Activated CD8-positive, alpha-beta T cell treated with anti-CD3 and anti-CD28 coated beads, Interleukin-2, amount 10 ng/mL, durations not matched to agents 7 days and 5 days (primary cell): ENCODE measurements at regions of chr14 and their contacts with region 1.

Region 1: GRCh38 chr14:20613094-20614037 is 22.2 kb upstream of the RNASE12 start:
- DNase-seq: peak; percentile 88
- ATAC-seq: peak; percentile 87
- H3K4me3 Mint-ChIP-seq: no peak overlapping the region
- H3K27ac Mint-ChIP-seq: no peak overlapping the region
- H3K4me1 Mint-ChIP-seq: peaks cover 22% of the 10 kb centered on the region
- H3K27me3 Mint-ChIP-seq: peaks cover 16% of the 10 kb centered on the region

Region 2: DNA sequence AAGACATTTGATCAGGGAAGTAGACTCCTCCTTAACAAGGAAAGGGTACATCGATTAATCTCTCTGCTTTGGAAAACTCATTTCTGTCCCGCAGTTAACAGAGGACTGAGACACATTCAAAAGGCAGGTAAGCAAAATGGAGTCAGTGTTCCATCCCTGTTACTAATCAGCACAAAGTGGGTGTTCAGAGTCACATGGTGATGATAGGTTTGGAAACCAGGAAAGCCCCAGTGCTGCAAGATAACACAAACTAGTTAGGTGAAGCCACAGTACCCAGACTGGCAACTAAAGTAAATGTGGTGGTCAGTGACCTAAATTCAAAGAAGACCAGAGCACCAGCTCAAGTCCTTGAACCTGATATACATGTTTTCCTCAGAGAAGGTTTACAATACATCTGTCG is 501.0 kb before region 1 on chr14:
- CTCF ChIA-PET with region 1: no interaction called
- POLR2A ChIA-PET with region 1: no interaction called
- DNase-seq: no peak
- ATAC-seq: no peak
- H3K4me3 Mint-ChIP-seq: no peak overlapping the region
- H3K27ac Mint-ChIP-seq: no peak overlapping the region
- H3K4me1 Mint-ChIP-seq: no peaks in the 10 kb centered on the region
- H3K27me3 Mint-ChIP-seq: no peaks in the 10 kb centered on the region

Region 3: DNA sequence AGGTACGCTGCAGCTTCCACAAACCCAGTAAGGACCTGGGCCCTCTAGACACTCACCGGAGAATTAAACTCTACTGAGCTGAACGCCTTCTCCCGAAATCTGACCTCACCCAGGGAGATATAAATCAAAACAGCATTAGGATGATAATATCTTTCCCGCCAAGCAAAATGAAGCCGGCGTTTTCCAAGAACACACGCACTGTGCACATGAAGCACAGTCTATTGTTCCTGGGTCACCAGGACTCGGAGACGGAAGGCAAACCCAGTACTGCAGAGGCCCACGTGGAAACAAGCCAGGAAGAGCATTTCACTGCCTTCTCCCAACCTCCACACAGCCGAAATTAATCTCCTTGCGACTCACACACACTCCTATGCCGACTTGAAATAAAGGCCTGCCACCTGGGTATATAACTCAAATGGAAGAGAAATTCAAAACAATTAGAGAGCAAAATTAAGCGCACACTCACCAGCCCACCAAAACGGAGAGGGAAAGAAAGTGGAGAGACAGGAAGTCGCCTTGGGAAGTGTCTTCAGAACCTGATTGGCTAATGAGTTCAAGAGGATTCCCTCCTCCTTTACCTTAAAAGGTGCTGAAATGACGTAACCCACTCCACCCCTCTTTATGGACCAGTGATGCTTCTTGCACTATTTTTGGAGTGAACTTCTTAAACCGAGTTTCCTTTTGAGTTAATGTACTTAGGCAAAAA is 280.4 kb before region 1 on chr14 and contains the start of gene CCNB1IP1:
- CTCF ChIA-PET with region 1: interaction called, 151 read pairs
- POLR2A ChIA-PET with region 1: no interaction called
- DNase-seq: peak; percentile 72
- ATAC-seq: peak; percentile 99
- H3K4me3 Mint-ChIP-seq: peak within 1 kb of the TSS; percentile 99
- H3K27ac Mint-ChIP-seq: peak within 1 kb of the TSS; percentile 93
- H3K4me1 Mint-ChIP-seq: peaks cover 51% of the 10 kb centered on the region
- H3K27me3 Mint-ChIP-seq: peaks cover 4% of the 10 kb centered on the region
- total RNA-seq, gene CCNB1IP1: 35.3 to 38.3 TPM

Region 4: DNA sequence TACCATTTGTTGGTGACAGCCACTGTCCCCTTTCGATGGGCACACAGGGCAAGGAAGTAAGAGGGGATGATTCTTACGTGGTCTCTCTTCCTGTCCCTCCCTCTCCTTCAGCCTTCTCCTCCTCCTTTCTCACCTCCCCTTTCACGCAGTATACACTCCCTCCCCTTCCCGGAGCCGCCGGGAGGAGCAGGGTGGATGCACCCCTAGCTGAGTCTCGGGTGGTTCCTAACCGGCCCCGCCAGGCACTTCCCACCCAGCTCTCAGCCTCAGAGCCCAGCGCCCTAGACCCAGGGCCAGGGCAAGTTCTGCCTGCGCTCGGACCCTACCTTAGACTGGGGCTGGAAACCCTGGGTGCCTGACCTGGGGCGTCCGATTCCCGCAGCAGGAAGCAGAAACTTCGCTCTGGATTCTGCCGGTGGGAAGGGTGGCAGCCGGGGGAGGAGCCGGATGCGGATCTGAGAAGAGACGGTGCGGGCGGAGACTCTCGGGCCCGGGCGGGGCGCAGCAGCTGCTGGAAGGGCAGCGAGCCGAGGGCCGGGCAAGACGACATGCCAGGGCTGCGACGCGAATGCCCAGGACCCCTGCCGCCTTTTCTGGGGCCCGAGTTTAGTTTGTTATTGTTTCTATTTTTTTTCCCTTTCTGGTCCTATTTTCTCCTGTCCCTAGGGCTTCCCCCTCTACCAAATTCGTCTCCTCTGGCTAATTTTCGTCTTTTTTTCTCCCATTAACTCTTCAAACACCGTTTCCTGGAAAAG is 200.1 kb before region 1 on chr14 and contains the start of gene TEP1:
- CTCF ChIA-PET with region 1: interaction called, 59 read pairs
- POLR2A ChIA-PET with region 1: interaction called, 3 read pairs
- DNase-seq: peak; percentile 82
- ATAC-seq: peak; percentile 92
- H3K4me3 Mint-ChIP-seq: peak within 1 kb of the TSS; percentile 94
- H3K27ac Mint-ChIP-seq: peak within 1 kb of the TSS; percentile 95
- H3K4me1 Mint-ChIP-seq: peaks cover 42% of the 10 kb centered on the region
- H3K27me3 Mint-ChIP-seq: no peaks in the 10 kb centered on the region
- total RNA-seq, gene TEP1: 34.6 to 48.7 TPM

Region 5: GRCh38 chr14:20624495-20625070 is 11.2 kb after region 1 on chr14:
- CTCF ChIA-PET with region 1: interaction called, 19 read pairs
- POLR2A ChIA-PET with region 1: interaction called, 3 read pairs
- DNase-seq: peak; percentile 68
- ATAC-seq: peak; percentile 66
- H3K4me3 Mint-ChIP-seq: peak overlapping the region; percentile 66
- H3K27ac Mint-ChIP-seq: peak overlapping the region; percentile 61
- H3K4me1 Mint-ChIP-seq: peaks cover 51% of the 10 kb centered on the region
- H3K27me3 Mint-ChIP-seq: peaks cover 60% of the 10 kb centered on the region

Region 6: DNA sequence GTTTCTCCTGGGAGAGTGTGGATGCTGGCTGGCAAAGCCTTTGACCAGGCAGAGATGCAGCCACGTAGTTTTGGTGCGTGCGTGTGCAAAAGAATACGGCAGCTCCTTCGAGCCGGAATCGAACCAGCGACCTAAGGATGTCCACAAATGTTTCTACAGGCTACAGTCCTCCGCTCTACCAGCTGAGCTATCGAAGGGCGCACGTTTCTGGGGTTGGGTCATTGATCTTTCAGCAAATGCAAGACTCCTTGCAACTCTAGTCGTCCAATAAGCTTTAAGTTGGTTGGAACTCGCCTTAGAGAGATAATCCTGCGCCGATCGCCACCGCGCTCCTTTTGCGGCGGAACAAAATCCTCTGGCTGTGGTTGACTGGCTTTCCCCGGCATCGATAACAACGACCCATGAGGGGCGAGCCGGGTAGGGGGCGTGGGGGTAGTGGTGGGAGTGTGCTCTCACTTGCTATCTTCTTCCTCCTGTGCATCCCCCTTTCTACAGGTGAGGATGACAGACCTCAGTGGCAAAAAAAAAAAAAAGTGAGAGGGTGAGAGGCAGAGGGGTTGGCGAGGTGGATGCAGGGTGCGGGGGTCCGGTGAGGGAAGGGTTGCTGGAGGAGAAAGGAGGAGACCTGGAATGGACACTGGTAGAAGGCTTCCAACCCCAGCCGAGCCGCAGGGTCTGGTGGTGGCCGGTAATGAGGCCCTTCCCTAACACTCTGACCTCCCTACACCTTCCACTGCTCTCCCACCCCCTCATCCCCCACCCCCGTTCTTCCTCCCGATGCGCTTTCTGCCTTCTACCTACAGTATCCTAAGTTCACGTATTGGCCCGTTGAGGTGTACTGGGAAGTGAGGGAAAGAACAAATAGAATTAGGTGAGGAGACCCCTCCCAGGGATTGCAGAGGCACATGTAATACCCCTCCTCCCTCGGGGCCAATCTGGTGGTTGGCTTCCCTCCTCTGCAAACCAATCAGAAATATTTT is 39.9 kb after region 1 on chr14:
- CTCF ChIA-PET with region 1: interaction called, 12 read pairs
- POLR2A ChIA-PET with region 1: no interaction called
- DNase-seq: peak; percentile 60
- ATAC-seq: peak; percentile 66
- H3K4me3 Mint-ChIP-seq: peak overlapping the region; percentile 53
- H3K27ac Mint-ChIP-seq: no peak overlapping the region
- H3K4me1 Mint-ChIP-seq: peaks cover 28% of the 10 kb centered on the region
- H3K27me3 Mint-ChIP-seq: peaks cover 59% of the 10 kb centered on the region

Region 7: GRCh38 chr14:20690848-20691523 is 77.6 kb after region 1 on chr14:
- CTCF ChIA-PET with region 1: interaction called, 20 read pairs
- POLR2A ChIA-PET with region 1: no interaction called
- DNase-seq: peak; percentile 61
- ATAC-seq: peak; percentile 81
- H3K4me3 Mint-ChIP-seq: no peak overlapping the region
- H3K27ac Mint-ChIP-seq: no peak overlapping the region
- H3K4me1 Mint-ChIP-seq: peaks cover 11% of the 10 kb centered on the region
- H3K27me3 Mint-ChIP-seq: no peaks in the 10 kb centered on the region